Thyroid gland (tissue), 4 donors: ENCODE measurements at regions of chr6 and their contacts with region 1.

Region 1: DNA sequence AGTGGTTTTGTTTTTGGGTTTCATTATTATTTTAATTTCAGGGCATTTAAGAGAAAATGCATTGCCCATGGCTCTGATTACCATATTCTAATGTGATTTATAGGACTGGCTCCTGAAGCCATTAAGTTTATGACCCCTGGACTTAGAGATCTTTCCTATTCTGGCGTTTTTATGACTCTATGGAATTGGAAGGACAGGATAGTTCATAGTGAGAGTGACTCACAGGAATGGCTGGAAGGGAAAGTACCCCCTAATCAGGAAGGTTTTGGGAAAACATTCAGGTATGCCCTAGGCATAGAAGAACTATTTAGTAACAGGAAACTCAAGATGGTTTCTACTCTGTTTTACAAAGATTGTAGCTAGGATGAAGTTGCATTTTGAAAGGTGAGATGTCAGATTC is 108.6 kb upstream of the SLC2A12 start:
- DNase-seq: no peak
- H3K4me3 ChIP-seq: no peak overlapping the region
- H3K27ac ChIP-seq: no peak overlapping the region
- H3K4me1 ChIP-seq: no peaks in the 10 kb centered on the region
- H3K27me3 ChIP-seq: no peaks in the 10 kb centered on the region
- CTCF ChIP-seq: no peak
- POLR2A ChIP-seq: no peak

Region 2: DNA sequence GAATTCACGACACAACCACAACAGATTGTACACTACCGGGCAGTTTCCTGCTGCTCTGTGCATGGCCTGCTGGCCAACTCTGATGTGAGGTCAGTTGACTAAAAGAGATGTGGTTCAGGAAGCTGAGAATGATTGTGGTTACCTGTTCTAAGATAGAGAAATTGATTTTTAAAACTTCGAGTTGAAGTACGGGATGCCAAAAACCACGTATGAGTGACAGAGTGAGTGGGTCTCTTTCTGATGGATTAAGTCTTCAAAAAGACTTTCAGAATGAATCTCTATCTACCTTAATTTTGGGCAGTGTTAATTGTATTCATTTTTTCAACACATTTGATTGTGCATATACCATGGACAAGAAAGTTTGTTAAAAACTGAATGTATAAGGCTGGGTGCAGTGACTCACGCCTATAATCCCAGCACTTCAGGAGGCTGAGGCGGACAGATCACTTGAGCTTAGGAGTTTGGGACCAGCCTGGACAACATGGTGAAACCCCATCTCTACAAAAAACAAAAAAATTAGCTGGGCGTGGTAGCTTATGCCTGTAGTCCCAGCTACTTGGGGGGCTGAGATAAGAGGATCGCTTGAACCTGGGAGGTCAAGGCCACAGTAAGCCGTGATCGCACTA is 35.6 kb after region 1 on chr6:
- intact Hi-C with region 1: no loop called
- DNase-seq: no peak
- H3K4me3 ChIP-seq: no peak overlapping the region
- H3K27ac ChIP-seq: peak overlapping the region; percentile 70 to 76 (median 71)
- H3K4me1 ChIP-seq: peaks cover 50 to 59% of the 10 kb centered on the region in 2 donors
- H3K27me3 ChIP-seq: no peaks in the 10 kb centered on the region
- CTCF ChIP-seq: no peak
- POLR2A ChIP-seq: no peak

Region 3: DNA sequence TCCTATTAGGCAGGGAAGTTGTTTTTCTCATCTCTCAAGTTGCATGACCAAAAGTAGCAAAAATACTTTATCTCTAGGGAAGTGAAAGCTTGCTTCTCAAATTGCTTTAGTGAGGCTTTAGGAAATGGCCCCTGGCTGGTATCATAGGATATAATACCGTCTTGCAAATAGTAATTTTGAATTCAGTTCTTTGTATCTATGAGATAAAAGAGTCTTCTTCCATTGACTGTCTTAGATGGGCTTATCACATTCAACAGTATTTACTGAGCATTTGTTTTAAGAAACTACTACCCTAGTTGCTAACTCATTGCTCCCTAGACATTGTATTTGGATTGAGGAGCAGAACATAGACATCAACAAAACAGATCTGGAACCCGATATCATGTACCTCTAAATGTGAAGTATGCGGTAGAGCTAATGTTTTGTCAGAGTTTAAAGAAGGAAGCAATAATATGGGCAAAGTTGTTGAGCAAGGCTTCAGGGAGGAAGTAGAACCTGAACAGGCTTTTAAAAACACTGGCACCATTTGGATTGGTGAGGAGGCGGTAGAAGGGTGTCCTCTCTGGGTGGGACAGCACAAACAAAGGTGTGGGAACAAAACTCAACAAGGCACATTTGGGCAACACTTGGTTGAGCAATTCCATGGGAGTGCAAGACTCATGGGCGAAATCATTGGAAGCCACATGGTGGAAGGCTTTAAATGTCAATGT is 55.4 kb after region 1 on chr6:
- intact Hi-C with region 1: no loop called
- DNase-seq: no peak
- H3K4me3 ChIP-seq: no peak overlapping the region
- H3K27ac ChIP-seq: no peak overlapping the region
- H3K4me1 ChIP-seq: no peaks in the 10 kb centered on the region
- H3K27me3 ChIP-seq: no peaks in the 10 kb centered on the region
- CTCF ChIP-seq: no peak
- POLR2A ChIP-seq: no peak

Region 4: GRCh38 chr6:134398453-134398852 is 237.4 kb after region 1 on chr6:
- intact Hi-C with region 1: no loop called
- DNase-seq: no peak
- H3K4me3 ChIP-seq: no peak overlapping the region
- H3K27ac ChIP-seq: no peak overlapping the region
- H3K4me1 ChIP-seq: no peaks in the 10 kb centered on the region
- H3K27me3 ChIP-seq: no peaks in the 10 kb centered on the region
- CTCF ChIP-seq: no peak
- POLR2A ChIP-seq: no peak

Region 5: DNA sequence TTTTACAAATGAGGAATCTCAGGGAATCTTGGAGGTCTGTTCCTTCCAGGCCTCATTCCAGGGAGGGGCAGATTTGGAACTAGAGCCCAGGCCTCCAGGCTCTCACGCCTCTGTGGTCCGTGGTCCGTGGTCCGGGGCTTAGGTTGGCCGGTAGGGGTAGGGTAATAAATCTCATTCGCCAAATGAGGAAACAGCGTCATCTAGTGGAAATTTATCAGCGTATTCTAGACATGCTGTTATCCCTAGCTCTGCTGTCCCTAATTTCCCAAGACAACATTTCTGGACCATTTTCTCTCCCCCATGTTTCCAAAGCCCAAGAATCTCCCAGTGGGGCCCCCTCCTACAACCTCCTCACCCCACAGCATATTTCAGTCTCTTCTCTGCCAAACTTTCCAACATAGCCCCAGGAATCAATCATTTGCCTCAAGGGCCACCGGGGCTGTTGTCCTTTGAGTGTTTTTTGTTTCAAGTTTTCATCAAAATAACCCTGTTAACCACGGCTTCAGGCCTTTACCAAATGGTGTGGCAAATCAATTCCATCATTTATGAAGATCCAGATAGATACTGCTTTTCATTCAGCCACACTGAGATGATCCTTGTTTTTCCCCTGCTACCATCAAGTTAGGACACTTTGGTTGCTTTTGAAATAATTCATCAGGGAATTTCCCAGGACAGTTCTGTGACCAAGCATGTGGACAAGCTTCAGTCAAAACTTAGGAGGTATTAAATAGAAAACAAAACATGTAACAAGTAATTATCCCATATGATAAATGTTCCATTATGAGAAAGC is 662.1 kb after region 1 on chr6:
- intact Hi-C with region 1: loop called (anchors 5 kb)
- DNase-seq: peak; percentile 27 to 45
- H3K4me3 ChIP-seq: no peak overlapping the region
- H3K27ac ChIP-seq: no peak overlapping the region
- H3K4me1 ChIP-seq: peaks cover 4 to 18% of the 10 kb centered on the region in 2 donors
- H3K27me3 ChIP-seq: no peaks in the 10 kb centered on the region
- CTCF ChIP-seq: peak; percentile 65 to 99 (median 90)
- POLR2A ChIP-seq: no peak